Upper lobe of right lung (tissue), 1 donor: ENCODE measurements at regions of chr17 and their contacts with region 1.

Region 1: GRCh38 chr17:53941231-53941630 is 118.5 kb downstream of the KIF2B start:
- DNase-seq: no peak
- ATAC-seq: no peak
- H3K4me3 ChIP-seq: no peak overlapping the region
- H3K27ac ChIP-seq: no peak overlapping the region
- H3K4me1 ChIP-seq: no peaks in the 10 kb centered on the region
- H3K27me3 ChIP-seq: no peaks in the 10 kb centered on the region
- CTCF ChIP-seq: no peak

Region 2: GRCh38 chr17:53996130-53996529 is 54.9 kb after region 1 on chr17:
- intact Hi-C with region 1: loop called (anchors 2 kb)
- DNase-seq: no peak
- ATAC-seq: no peak
- H3K4me3 ChIP-seq: no peak overlapping the region
- H3K27ac ChIP-seq: no peak overlapping the region
- H3K4me1 ChIP-seq: no peaks in the 10 kb centered on the region
- H3K27me3 ChIP-seq: no peaks in the 10 kb centered on the region
- CTCF ChIP-seq: no peak